Activated CD4-positive, alpha-beta memory T cell treated with anti-CD3 and anti-CD28 coated beads for 36 hours (primary cell): ENCODE measurements at regions of chr5 and their contacts with region 1.

Region 1: GRCh38 chr5:34533582-34534522 is 122.3 kb upstream of the RAI14 start:
- DNase-seq: peak; percentile 48
- H3K4me3 Mint-ChIP-seq: no peak overlapping the region
- H3K27ac Mint-ChIP-seq: peak overlapping the region; percentile 24
- H3K4me1 Mint-ChIP-seq: peaks cover 28% of the 10 kb centered on the region
- H3K27me3 Mint-ChIP-seq: peaks cover 3% of the 10 kb centered on the region

Region 2: GRCh38 chr5:34474573-34475021 is 59.3 kb before region 1 on chr5:
- CTCF ChIA-PET with region 1: interaction called, 22 read pairs
- POLR2A ChIA-PET with region 1: no interaction called
- intact Hi-C with region 1: no loop called
- DNase-seq: no peak
- H3K4me3 Mint-ChIP-seq: no peak overlapping the region
- H3K27ac Mint-ChIP-seq: no peak overlapping the region
- H3K4me1 Mint-ChIP-seq: no peaks in the 10 kb centered on the region
- H3K27me3 Mint-ChIP-seq: peaks cover 13% of the 10 kb centered on the region

Region 3: GRCh38 chr5:34499001-34499734 is 34.7 kb before region 1 on chr5:
- CTCF ChIA-PET with region 1: no interaction called
- POLR2A ChIA-PET with region 1: no interaction called
- intact Hi-C with region 1: loop called (anchors 1 kb)
- DNase-seq: peak; percentile 45
- H3K4me3 Mint-ChIP-seq: peak overlapping the region; percentile 17
- H3K27ac Mint-ChIP-seq: peak overlapping the region; percentile 49
- H3K4me1 Mint-ChIP-seq: peaks cover 13% of the 10 kb centered on the region
- H3K27me3 Mint-ChIP-seq: peaks cover 23% of the 10 kb centered on the region

Region 4: GRCh38 chr5:34656001-34656699 is 122.3 kb after region 1 on chr5 and contains the start of gene RAI14:
- CTCF ChIA-PET with region 1: no interaction called
- POLR2A ChIA-PET with region 1: no interaction called
- intact Hi-C with region 1: loop called (anchors 10 kb)
- DNase-seq: peak; percentile 36
- H3K4me3 Mint-ChIP-seq: peak within 1 kb of the TSS; percentile 77
- H3K27ac Mint-ChIP-seq: no peak within 1 kb of the TSS
- H3K4me1 Mint-ChIP-seq: peaks cover 16% of the 10 kb centered on the region
- H3K27me3 Mint-ChIP-seq: peaks cover 28% of the 10 kb centered on the region
- total RNA-seq, gene RAI14: 3.9 to 5.4 TPM